ENCODE measurements at regions of chr1 and their contacts with region 1.

Region 1: DNA sequence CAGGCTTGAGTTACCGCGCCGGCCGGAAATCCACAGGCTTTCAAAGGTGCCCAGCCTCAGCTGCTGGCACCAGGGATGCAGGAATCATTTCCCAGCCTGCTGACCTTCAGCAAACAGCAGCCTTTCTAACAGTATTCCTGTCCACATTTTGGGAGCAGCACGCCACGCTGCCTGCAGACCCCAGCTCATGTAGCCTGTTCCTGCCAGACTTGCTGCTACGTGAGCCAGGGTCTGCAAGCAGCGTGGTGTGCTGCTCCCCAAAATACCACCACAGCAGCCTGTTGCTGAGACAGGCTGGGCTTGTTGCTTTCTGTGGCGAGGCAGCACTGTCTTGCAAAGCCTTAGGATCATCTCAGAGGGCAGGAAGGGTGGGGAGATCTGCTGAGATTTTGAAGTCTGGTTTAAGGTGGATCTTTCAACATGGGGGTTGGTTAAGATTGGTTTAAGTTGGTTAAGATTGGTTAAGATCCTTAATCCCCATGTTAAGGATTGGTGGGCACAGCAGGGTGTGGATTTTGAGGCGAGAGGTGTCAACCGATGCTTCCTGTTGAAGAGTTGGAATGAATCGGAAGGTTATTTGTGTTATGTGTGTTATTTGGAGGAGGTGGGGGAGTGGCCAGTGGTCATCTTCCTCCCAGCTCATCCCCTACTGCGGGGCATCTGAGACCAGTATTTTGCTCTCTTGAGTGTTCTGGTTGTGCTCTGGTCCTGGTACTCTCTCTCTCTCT is 12.9 kb downstream of the FAAH start:
- DNase-seq: peak; percentile 52
- H3K4me3 ChIP-seq: peak overlapping the region in 1 of 2 experiments; percentile 42; a peak in 1 of 4 replicates
- H3K27ac ChIP-seq: no peak overlapping the region
- H3K4me1 ChIP-seq: no peaks in the 10 kb centered on the region; a peak in 1 of 4 replicates
- H3K27me3 ChIP-seq: no peaks in the 10 kb centered on the region
- CTCF ChIP-seq: no peak
- EP300 ChIP-seq: no peak
- RAD21 ChIP-seq: no peak

Region 2: GRCh38 chr1:46396441-46397398 is 10.3 kb before region 1 on chr1:
- CTCF ChIA-PET with region 1: interaction called, 13 read pairs
- POLR2A ChIA-PET with region 1: no interaction called
- DNase-seq: peak; percentile 22
- H3K4me3 ChIP-seq: no peak overlapping the region
- H3K27ac ChIP-seq: no peak overlapping the region
- H3K4me1 ChIP-seq: peaks cover 0 to 6% of the 10 kb centered on the region in 2 experiments; a peak in 1 of 4 replicates
- H3K27me3 ChIP-seq: no peaks in the 10 kb centered on the region
- CTCF ChIP-seq: no peak
- EP300 ChIP-seq: no peak
- RAD21 ChIP-seq: no peak

Region 3: GRCh38 chr1:46687093-46687659 is 280.1 kb after region 1 on chr1:
- CTCF ChIA-PET with region 1: no interaction called
- POLR2A ChIA-PET with region 1: no interaction called
- DNase-seq: no peak
- H3K4me3 ChIP-seq: no peak overlapping the region
- H3K27ac ChIP-seq: peak overlapping the region; percentile 15 to 16; a peak in 3 of 4 replicates
- H3K4me1 ChIP-seq: peaks cover 2 to 41% of the 10 kb centered on the region in 2 experiments
- H3K27me3 ChIP-seq: no peaks in the 10 kb centered on the region
- CTCF ChIP-seq: no peak
- EP300 ChIP-seq: no peak
- RAD21 ChIP-seq: no peak

Measured in SK-N-SH (cell line).